ENCODE measurements at regions of chr5 and their contacts with region 1.

Region 1: GRCh38 chr5:95669540-95669939 is 13.3 kb downstream of the SPATA9 start:
- DNase-seq: peak; percentile 66
- ATAC-seq: peak; percentile 95

Region 2: GRCh38 chr5:95730730-95731570 is 61.4 kb after region 1 on chr5 and contains the start of gene RHOBTB3:
- intact Hi-C with region 1: loop called (anchors 2 kb)
- DNase-seq: peak; percentile 93
- ATAC-seq: peak; percentile 80
- total RNA-seq, gene RHOBTB3: 76.5 TPM